ENCODE measurements at regions of chr9 and their contacts with region 1.

Region 1: GRCh38 chr9:132235946-132236661 is 74.2 kb downstream of the NTNG2 start:
- DNase-seq: no peak
- H3K4me3 ChIP-seq: no peak overlapping the region
- H3K27ac ChIP-seq: no peak overlapping the region
- H3K4me1 ChIP-seq: peaks cover 7 to 19% (median 14%) of the 10 kb centered on the region in 4 donors
- H3K27me3 ChIP-seq: peaks cover 0 to 36% (median 4%) of the 10 kb centered on the region in 4 donors
- CTCF ChIP-seq: peak; percentile 84 to 98 (median 90)
- EP300 ChIP-seq: no peak
- POLR2A ChIP-seq: no peak

Region 2: DNA sequence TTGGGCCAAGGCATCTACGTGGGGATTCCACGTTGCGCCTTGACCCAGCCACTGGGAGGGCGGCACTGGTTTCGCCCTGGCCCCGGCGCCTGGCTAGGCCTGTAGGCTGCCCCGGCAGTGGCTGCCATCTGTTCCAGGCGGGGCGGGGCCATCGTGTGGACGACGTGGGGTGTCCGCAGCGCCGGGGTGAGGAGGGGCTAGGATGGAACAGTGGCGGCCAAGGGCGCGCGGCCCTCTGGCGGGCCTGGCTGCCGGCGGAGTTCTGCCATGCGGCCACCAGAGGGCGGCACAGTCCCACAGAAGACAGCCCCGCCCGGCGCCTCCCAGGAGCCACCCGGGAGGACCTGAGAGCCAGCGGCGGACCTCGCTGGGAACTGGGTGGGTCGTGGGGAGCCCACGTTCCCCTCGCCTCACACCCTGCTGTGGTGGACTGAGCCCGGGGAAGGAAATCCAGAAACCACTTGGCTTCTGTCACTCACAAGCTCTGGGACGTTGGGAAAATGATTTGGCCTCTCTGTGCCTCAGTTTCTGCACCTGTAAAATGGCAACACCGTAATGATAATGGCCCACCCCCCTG is 473.7 kb before region 1 on chr9:
- intact Hi-C with region 1: loop called (anchors 5 kb)
- DNase-seq: no peak
- H3K4me3 ChIP-seq: peak overlapping the region in 1 of 4 donors; percentile 24
- H3K27ac ChIP-seq: no peak overlapping the region
- H3K4me1 ChIP-seq: peaks cover 3 to 9% (median 7%) of the 10 kb centered on the region in 4 donors
- H3K27me3 ChIP-seq: peaks cover 0 to 56% (median 0%) of the 10 kb centered on the region in 4 donors
- CTCF ChIP-seq: peak; percentile 92 to 99 (median 98)
- EP300 ChIP-seq: no peak
- POLR2A ChIP-seq: no peak

Region 3: DNA sequence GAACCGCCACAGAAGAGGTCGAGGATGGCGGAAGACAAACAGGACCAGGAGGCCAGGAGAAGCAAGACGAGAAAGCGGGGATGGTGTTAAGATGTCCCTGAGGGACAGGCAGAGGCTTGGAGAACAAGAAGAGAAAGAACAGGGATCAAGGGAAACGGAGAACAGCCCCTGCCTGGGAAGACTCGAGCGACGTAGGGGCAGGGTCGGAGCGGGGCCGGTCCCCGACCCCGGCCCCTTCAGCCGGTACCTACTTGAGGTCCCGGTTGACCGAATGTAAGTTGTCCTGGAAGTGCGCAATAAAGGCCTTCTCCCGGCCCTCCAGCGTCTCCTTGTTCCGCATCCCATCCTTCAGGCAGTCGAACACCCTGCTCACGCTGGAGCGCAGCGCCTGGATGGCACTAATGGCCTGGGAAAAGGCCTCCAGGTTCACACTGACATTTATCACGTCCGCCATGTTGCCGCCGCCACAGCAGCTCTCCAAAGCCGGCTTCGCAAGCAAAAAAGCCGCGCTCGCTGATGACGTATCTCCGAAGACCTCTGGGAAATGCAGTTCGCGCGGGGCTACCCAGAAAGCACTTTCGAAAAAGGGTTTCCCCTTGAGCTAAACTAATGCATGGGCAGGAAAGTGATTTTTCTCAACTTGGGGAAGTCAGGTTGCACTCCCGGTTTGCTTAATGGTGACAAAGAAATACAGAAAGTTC is 156.6 kb before region 1 on chr9 and contains the start of gene MED27:
- intact Hi-C with region 1: loop called (anchors 10 kb)
- DNase-seq: peak; percentile 97
- H3K4me3 ChIP-seq: peak within 1 kb of the TSS; percentile 75 to 87 (median 82)
- H3K27ac ChIP-seq: peak within 1 kb of the TSS; percentile 73 to 81 (median 77)
- H3K4me1 ChIP-seq: peaks cover 18 to 52% (median 48%) of the 10 kb centered on the region in 4 donors
- H3K27me3 ChIP-seq: peaks cover 0 to 7% (median 0%) of the 10 kb centered on the region in 4 donors
- CTCF ChIP-seq: peak in 1 of 3 experiments; percentile 9
- EP300 ChIP-seq: no peak
- POLR2A ChIP-seq: no peak
- total RNA-seq, gene MED27: 12.9 to 21.8 (median 20.0) TPM

Region 4: DNA sequence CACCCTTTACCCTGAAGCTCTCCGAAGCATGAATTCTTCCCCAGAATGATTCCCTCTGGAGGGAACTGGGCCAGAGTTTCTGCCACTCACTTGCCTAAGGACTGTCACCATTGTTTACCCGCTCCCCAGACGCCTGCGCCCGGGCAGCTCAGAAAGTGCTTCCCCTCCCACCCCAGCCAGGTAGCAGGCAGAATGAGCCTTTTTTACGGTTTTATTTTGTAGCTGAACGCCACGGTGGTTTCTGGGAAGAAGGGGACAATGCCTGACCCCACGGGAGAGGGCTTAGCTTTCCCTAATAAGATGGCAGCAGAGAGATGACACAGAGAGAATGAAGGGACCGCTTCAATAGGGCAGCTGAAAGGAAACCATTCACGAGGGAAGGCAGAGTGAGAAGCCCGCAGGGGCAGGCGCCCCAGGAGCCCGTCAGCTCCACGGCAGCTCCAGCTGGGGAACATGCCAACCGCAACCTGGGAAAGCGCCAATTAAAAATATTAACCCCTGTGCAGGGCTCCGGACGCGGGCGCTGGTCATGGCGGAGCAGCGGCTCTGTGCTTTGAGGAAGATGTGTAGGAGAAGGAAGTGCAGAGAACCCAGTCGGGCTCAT is 94.7 kb before region 1 on chr9:
- intact Hi-C with region 1: no loop called
- DNase-seq: no peak
- H3K4me3 ChIP-seq: peak overlapping the region; percentile 20 to 34 (median 26)
- H3K27ac ChIP-seq: no peak overlapping the region
- H3K4me1 ChIP-seq: peaks cover 7 to 10% (median 9%) of the 10 kb centered on the region in 4 donors
- H3K27me3 ChIP-seq: peaks cover 0 to 96% (median 23%) of the 10 kb centered on the region in 4 donors
- CTCF ChIP-seq: no peak
- EP300 ChIP-seq: no peak
- POLR2A ChIP-seq: no peak

Region 5: DNA sequence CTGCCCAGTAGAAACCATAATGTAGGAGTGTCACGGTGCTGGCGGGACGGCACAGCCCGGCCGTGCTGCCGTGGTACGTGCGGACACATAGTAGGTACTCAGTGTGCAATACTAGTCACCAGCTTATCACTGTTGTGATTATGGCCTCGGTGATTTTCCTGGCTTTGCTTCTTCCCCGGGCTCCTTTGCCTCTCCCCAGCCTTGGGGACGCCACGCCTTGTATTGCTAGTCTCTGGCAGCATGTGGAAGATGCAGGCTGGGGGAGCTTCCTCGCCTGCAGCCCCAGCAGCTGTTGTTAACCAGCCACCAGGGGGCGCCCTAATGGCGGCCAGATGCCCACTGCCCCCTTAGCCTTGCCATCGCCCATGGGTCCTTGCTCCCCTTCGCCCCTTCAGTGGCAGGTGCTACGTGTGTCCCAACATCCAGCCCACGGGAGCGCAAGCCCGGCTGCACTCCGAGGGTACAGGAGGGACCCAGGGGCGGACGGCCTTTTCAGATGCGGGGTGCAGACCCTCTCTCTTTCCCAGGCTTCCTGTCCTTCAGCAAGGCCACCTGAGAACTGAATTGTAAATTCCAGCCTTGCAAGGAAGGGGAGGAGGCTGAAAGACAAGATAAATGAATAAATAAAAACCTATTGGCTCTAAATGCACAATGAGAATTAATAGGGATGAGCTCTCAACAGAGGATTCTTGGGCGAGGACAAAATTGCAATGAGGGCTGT is 66.3 kb before region 1 on chr9:
- intact Hi-C with region 1: loop called (anchors 2 kb)
- DNase-seq: no peak
- H3K4me3 ChIP-seq: no peak overlapping the region
- H3K27ac ChIP-seq: no peak overlapping the region
- H3K4me1 ChIP-seq: peaks cover 2 to 7% (median 4%) of the 10 kb centered on the region in 4 donors
- H3K27me3 ChIP-seq: peaks cover 0 to 60% (median 5%) of the 10 kb centered on the region in 4 donors
- CTCF ChIP-seq: peak; percentile 69 to 88 (median 77)
- EP300 ChIP-seq: no peak
- POLR2A ChIP-seq: no peak

Region 6: GRCh38 chr9:132367613-132368313 is 131.7 kb after region 1 on chr9:
- intact Hi-C with region 1: no loop called
- DNase-seq: no peak
- H3K4me3 ChIP-seq: no peak overlapping the region
- H3K27ac ChIP-seq: no peak overlapping the region
- H3K4me1 ChIP-seq: peaks cover 0 to 3% (median 0%) of the 10 kb centered on the region in 4 donors
- H3K27me3 ChIP-seq: no peaks in the 10 kb centered on the region
- CTCF ChIP-seq: no peak
- EP300 ChIP-seq: no peak
- POLR2A ChIP-seq: no peak

Measured in esophagus muscularis mucosa (tissue), 4 donors.